Heart right ventricle (tissue), 16 donors: ENCODE measurements at regions of chr10 and their contacts with region 1.

Region 1: DNA sequence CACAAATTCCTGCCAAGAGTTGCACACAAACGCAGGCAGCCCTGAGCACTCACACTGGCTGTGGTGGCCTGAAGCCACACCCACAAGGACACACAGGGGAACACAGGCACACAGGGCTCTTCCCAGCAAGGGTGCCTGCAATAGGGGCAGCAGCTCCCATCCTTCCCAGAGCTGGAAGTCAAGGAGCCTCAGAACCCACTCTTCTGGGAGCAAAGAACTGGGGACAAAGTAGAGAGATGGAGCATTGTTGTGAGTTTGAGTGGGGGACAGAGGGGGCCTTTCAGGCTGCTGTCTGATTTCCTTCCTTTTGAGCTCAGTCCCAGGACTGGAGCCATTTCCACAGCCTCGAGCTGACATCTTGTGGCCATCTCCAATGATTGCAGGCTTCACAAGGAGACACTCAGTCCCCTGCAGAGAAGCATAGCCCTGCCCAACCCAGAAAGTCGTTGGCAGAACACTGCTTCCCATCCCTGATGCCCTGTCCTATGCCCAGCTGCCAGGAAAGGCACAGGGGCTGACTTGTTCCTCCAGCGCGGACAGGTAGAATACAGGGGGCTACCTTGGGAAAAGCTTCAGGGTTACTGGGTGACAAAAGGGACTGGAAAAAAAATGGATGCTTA is 34.4 kb upstream of the SLF2 start:
- DNase-seq: peak in 1 of 2 donors; percentile 35
- ATAC-seq: peak; percentile 69 to 88 (median 77)
- H3K4me3 ChIP-seq: no peak overlapping the region
- H3K27ac ChIP-seq: no peak overlapping the region
- H3K4me1 ChIP-seq: peaks cover 0 to 16% (median 3%) of the 10 kb centered on the region in 9 donors
- H3K27me3 ChIP-seq: peaks cover 0 to 61% (median 43%) of the 10 kb centered on the region in 7 donors
- CTCF ChIP-seq: peak in 8 of 9 donors; percentile 30 to 75 (median 64)

Region 2: DNA sequence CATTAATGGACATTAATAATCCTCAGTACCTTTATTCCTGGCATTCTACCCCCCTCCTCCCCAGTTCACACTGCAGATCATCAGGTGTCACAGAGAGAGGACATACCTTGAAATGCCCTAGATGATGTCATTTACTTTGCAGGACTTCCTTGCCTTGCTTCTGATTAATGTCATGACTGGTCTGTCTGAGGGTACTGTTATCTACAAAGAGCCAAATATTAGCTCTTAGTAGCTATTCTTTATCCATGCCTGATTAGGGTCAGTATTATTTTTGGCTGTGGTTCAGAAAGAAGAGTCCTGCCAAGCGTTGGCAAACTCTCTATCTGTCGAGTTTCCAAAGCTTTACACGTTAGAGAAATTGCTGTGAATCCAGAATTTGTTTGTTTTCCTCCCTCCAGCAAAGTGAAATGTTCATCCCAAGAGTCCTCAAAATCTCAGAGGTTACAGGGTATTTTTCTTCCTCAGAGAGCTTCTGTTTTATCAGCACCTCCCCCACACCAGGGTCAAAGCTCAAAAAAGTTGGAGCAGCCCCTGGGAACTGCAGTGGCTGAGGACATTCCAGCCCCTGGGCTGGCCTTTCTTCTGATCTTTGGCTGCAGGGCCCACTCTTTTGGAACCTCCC is 518.8 kb before region 1 on chr10:
- intact Hi-C with region 1: no loop called
- DNase-seq: no peak
- ATAC-seq: peak in 2 of 8 donors; percentile 11 to 43
- H3K4me3 ChIP-seq: no peak overlapping the region
- H3K27ac ChIP-seq: no peak overlapping the region
- H3K4me1 ChIP-seq: peaks cover 0 to 41% (median 13%) of the 10 kb centered on the region in 9 donors
- H3K27me3 ChIP-seq: no peaks in the 10 kb centered on the region
- CTCF ChIP-seq: no peak

Region 3: GRCh38 chr10:100433253-100434240 is 444.9 kb before region 1 on chr10:
- intact Hi-C with region 1: loop called in 7 of 10 experiments (anchors 5 to 10 kb)
- DNase-seq: peak; percentile 83 to 90
- ATAC-seq: peak; percentile 77 to 95 (median 90)
- H3K4me3 ChIP-seq: no peak overlapping the region
- H3K27ac ChIP-seq: no peak overlapping the region
- H3K4me1 ChIP-seq: no peaks in the 10 kb centered on the region
- H3K27me3 ChIP-seq: peaks cover 0 to 7% (median 0%) of the 10 kb centered on the region in 7 donors
- CTCF ChIP-seq: peak; percentile 97 to 100 (median 99)

Region 4: DNA sequence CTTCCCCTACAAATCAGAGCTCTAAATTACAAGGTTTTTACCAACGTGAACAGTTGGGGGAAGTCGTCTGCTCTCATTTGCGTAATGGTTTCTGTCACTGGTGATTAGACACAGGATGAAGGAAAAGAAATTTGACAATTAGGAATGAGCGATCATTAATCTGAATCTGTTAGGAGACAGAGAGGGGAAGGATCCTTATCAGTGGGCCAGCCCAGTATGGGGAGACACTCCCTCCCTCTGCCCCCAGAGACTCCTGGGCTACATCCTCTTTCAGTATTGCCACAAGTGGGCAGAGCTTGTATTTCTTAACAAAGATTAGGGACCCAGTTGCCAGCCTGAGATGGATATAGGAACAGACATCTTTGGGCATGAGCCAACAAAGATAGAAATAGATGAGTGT is 327.2 kb before region 1 on chr10:
- intact Hi-C with region 1: loop called in 1 of 10 experiments (anchors 10 kb)
- DNase-seq: no peak
- ATAC-seq: peak in 1 of 8 donors; percentile 21
- H3K4me3 ChIP-seq: no peak overlapping the region
- H3K27ac ChIP-seq: no peak overlapping the region
- H3K4me1 ChIP-seq: no peaks in the 10 kb centered on the region
- H3K27me3 ChIP-seq: no peaks in the 10 kb centered on the region
- CTCF ChIP-seq: no peak

Region 5: GRCh38 chr10:100659361-100660098 is 218.9 kb before region 1 on chr10:
- intact Hi-C with region 1: loop called in 2 of 10 experiments (anchors 10 kb)
- DNase-seq: no peak
- ATAC-seq: no peak
- H3K4me3 ChIP-seq: no peak overlapping the region
- H3K27ac ChIP-seq: no peak overlapping the region
- H3K4me1 ChIP-seq: peaks cover 0 to 21% (median 9%) of the 10 kb centered on the region in 9 donors
- H3K27me3 ChIP-seq: peaks cover 4 to 100% (median 98%) of the 10 kb centered on the region in 7 donors
- CTCF ChIP-seq: no peak

Region 6: GRCh38 chr10:100743626-100744135 is 134.7 kb before region 1 on chr10:
- intact Hi-C with region 1: loop called in 1 of 10 experiments (anchors 10 kb)
- DNase-seq: peak in 1 of 2 donors; percentile 24
- ATAC-seq: peak in 6 of 8 donors; percentile 27 to 75 (median 64)
- H3K4me3 ChIP-seq: peak overlapping the region in 1 of 10 donors; percentile 44
- H3K27ac ChIP-seq: no peak overlapping the region
- H3K4me1 ChIP-seq: peaks cover 18 to 66% (median 52%) of the 10 kb centered on the region in 9 donors
- H3K27me3 ChIP-seq: peaks cover 81 to 100% (median 100%) of the 10 kb centered on the region in 7 donors
- CTCF ChIP-seq: peak in 8 of 9 donors; percentile 34 to 69 (median 56)